Testis (tissue), 5 donors: ENCODE measurements at regions of chr19 and their contacts with region 1.

Region 1: DNA sequence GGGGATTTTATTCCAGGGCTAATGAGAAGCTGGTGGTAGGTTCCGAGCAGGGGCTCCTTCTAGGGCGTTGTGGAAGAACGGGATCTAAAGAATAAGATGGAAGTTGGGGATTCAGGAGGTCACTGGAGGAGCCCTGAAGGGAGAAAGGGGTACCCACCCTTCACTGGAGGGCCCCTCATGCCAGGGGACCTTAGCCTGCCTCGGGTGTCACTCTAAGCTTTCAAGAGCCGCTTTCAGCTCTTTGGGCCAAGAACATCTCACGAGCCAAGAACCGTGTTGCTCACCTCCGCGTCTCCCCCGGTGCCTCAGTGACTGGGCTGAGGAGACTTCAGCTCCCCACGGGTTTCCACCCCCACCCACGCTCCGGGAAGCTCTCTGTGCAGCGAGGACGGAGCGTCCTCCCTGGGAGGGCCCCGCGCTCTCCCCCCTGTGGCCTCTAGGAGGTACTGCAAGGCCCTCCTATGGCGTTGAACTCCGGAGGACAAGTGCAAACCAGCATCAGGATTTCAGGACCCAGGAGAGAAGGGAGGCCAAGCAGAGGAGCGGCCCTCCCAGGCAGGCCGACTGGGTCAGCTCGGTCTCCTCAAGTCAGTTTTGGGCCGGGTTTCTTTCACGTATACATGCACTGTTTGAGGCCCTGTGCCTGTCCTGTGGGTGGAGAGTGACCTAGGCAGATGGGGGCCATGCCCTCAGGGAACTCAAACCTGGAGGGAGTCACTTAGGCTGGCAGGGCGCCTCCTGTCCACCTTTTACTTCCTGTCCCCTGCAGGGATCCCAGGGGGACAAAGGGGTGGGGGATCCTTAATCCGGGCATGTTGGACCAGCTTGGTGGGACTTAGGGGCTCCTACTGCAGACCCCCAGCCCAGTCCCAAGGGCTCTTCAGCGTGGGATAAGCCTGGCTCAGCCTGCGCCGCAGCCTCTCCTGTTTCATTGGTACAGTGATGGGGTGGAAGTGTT is 5.1 kb upstream of the KRTDAP start:
- DNase-seq: peak; percentile 75
- H3K4me3 ChIP-seq: no peak overlapping the region
- H3K27ac ChIP-seq: no peak overlapping the region
- H3K4me1 ChIP-seq: no peaks in the 10 kb centered on the region
- H3K27me3 ChIP-seq: no peaks in the 10 kb centered on the region
- CTCF ChIP-seq: peak; percentile 86 to 97 (median 87)
- POLR2A ChIP-seq: no peak

Region 2: GRCh38 chr19:35352448-35353304 is 142.7 kb before region 1 on chr19:
- intact Hi-C with region 1: loop called (anchors 10 kb)
- DNase-seq: peak; percentile 73
- H3K4me3 ChIP-seq: peak overlapping the region in 1 of 2 donors; percentile 2
- H3K27ac ChIP-seq: no peak overlapping the region
- H3K4me1 ChIP-seq: peaks cover 5% of the 10 kb centered on the region
- H3K27me3 ChIP-seq: no peaks in the 10 kb centered on the region
- CTCF ChIP-seq: peak; percentile 63 to 84 (median 69)
- POLR2A ChIP-seq: no peak

Region 3: DNA sequence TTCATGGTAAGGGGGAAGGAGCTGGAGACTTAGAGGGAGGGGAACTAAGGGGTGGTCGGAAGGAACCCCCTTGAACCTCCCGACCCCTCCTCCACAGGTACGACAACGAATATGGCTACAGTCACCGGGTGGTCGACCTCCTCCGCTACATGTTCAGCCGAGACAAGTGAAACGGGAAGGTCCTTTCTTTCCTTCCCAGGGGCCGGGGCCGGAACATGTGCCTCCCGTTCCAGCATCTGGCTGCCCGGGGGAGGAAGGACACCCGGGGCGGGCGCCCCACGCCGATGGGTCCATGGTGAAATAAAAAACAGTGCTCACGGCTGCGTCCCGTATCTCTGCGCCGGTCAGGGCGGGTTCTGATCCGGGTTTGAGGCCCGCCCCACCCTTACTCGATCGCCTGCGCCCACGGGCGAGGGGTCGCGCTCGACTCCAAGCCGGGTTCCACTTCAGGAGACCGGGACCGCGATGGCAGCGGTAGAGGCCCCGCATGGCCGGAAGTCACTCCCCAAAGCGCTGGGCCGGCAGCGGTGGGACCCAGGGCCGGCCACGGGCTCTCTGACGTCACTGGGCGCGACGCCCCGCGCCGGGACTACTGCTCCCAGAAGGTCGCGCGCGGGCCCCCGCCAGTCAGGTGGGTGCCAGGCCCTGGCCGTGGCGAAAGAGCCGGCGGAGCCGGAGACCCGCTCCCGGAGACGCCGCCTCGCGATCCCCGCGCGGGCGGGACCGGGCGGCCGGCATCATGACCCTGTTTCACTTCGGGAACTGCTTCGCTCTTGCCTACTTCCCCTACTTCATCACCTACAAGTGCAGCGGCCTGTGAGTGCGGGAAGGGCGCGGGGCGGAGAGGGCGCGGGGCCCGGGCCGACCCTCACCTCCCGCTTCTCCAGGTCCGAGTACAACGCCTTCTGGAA is 49.9 kb after region 1 on chr19 and contains the start of gene TMEM147:
- intact Hi-C with region 1: no loop called
- DNase-seq: peak; percentile 96
- H3K4me3 ChIP-seq: peak within 1 kb of the TSS; percentile 93
- H3K27ac ChIP-seq: peak within 1 kb of the TSS; percentile 34 to 81
- H3K4me1 ChIP-seq: peaks cover 13% of the 10 kb centered on the region
- H3K27me3 ChIP-seq: no peaks in the 10 kb centered on the region
- CTCF ChIP-seq: peak in 1 of 3 experiments; percentile 14
- POLR2A ChIP-seq: no peak
- total RNA-seq, gene TMEM147: 125 TPM

Region 4: GRCh38 chr19:35592226-35592625 is 96.8 kb after region 1 on chr19:
- intact Hi-C with region 1: no loop called
- DNase-seq: peak; percentile 25
- H3K4me3 ChIP-seq: no peak overlapping the region
- H3K27ac ChIP-seq: no peak overlapping the region
- H3K4me1 ChIP-seq: no peaks in the 10 kb centered on the region
- H3K27me3 ChIP-seq: no peaks in the 10 kb centered on the region
- CTCF ChIP-seq: peak in 2 of 3 experiments; percentile 26 to 30
- POLR2A ChIP-seq: no peak